T-cell (primary cell): ENCODE measurements at regions of chr12 and their contacts with region 1.

Region 1: GRCh38 chr12:95593266-95593871 is 42.1 kb upstream of the USP44 start:
- DNase-seq: no peak
- ATAC-seq: no peak
- H3K4me3 ChIP-seq: no peak overlapping the region
- H3K4me3 Mint-ChIP-seq: no peak overlapping the region
- H3K27ac ChIP-seq: no peak overlapping the region
- H3K27ac Mint-ChIP-seq: no peak overlapping the region
- H3K4me1 ChIP-seq: no peaks in the 10 kb centered on the region
- H3K4me1 Mint-ChIP-seq: no peaks in the 10 kb centered on the region
- H3K27me3 ChIP-seq: peaks cover 0 to 7% of the 10 kb centered on the region in 2 experiments
- H3K27me3 Mint-ChIP-seq: peaks cover 0 to 4% of the 10 kb centered on the region in 2 donors

Region 2: DNA sequence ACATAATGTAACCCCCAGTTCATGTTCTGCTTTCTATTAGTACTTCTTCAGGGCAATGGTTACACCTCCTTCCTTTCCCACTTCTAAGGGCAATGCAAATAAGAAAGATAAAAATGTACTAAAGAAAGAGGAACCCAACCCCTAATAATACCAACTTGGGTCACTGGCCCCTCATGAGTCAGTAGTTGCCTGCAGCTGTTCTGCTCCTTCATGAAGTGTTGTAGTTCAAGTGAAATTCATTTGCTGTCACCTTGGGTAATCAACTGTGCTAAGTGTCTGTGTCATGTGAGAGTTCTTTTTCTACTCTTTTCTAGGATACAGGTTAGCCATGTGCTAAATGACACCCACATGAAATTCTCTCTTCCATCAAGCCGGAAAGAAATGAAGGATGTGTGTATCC is 1353.2 kb before region 1 on chr12:
- CTCF ChIA-PET with region 1: no interaction called
- POLR2A ChIA-PET with region 1: no interaction called
- DNase-seq: peak in 1 of 35 experiments; percentile 9
- ATAC-seq: no peak
- H3K4me3 ChIP-seq: no peak overlapping the region
- H3K4me3 Mint-ChIP-seq: no peak overlapping the region
- H3K27ac ChIP-seq: no peak overlapping the region
- H3K27ac Mint-ChIP-seq: no peak overlapping the region
- H3K4me1 ChIP-seq: peaks cover 0 to 13% of the 10 kb centered on the region in 2 experiments
- H3K4me1 Mint-ChIP-seq: peaks cover 13 to 26% (median 15%) of the 10 kb centered on the region in 3 donors
- H3K27me3 ChIP-seq: no peaks in the 10 kb centered on the region
- H3K27me3 Mint-ChIP-seq: no peaks in the 10 kb centered on the region

Region 3: DNA sequence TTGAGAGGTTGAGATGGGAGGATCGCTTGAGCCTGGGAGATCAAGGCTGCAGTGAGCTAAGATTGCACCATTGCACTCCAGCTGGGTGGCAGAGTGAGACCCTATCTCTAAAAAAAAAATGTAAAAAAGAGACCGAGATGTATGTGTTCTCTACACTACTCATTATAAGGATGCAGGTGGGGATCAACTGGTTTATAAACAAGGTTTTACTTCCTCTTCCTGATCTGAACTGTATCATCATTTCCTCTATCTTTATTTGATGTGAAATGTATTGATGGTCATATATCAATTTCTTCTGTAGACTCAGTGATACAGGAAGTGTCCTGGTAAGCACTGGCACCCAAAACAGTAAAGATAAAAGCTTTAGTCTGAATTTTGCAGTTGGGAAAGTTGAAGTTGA is 22.0 kb before region 1 on chr12:
- CTCF ChIA-PET with region 1: no interaction called
- POLR2A ChIA-PET with region 1: interaction called in 1 of 2 experiments, 10 read pairs
- DNase-seq: no peak
- ATAC-seq: peak in 1 of 4 experiments; percentile 35
- H3K4me3 ChIP-seq: no peak overlapping the region
- H3K4me3 Mint-ChIP-seq: peak overlapping the region in 1 of 3 donors; percentile 28
- H3K27ac ChIP-seq: no peak overlapping the region
- H3K27ac Mint-ChIP-seq: peak overlapping the region; percentile 55 to 61
- H3K4me1 ChIP-seq: peaks cover 0 to 7% of the 10 kb centered on the region in 2 experiments
- H3K4me1 Mint-ChIP-seq: peaks cover 12 to 34% (median 20%) of the 10 kb centered on the region in 3 donors
- H3K27me3 ChIP-seq: peaks cover 0 to 12% of the 10 kb centered on the region in 2 experiments
- H3K27me3 Mint-ChIP-seq: peaks cover 0 to 3% of the 10 kb centered on the region in 2 donors